HEK293 (cell line): ENCODE measurements at regions of chr4 and their contacts with region 1.

Region 1: GRCh38 chr4:169293343-169294176 is 22.8 kb upstream of the SH3RF1 start:
- H3K4me3 ChIP-seq: no peak overlapping the region
- H3K27ac ChIP-seq: no peak overlapping the region
- H3K4me1 ChIP-seq: no peaks in the 10 kb centered on the region
- CTCF ChIP-seq: no peak

Region 2: GRCh38 chr4:169346840-169347239 is 53.3 kb after region 1 on chr4:
- CTCF ChIA-PET with region 1: no interaction called
- POLR2A ChIA-PET with region 1: interaction called, 11 read pairs
- H3K4me3 ChIP-seq: no peak overlapping the region
- H3K27ac ChIP-seq: no peak overlapping the region
- H3K4me1 ChIP-seq: no peaks in the 10 kb centered on the region
- CTCF ChIP-seq: no peak